Sigmoid colon (tissue), 7 donors: ENCODE measurements at regions of chr13 and their contacts with region 1.

Region 1: DNA sequence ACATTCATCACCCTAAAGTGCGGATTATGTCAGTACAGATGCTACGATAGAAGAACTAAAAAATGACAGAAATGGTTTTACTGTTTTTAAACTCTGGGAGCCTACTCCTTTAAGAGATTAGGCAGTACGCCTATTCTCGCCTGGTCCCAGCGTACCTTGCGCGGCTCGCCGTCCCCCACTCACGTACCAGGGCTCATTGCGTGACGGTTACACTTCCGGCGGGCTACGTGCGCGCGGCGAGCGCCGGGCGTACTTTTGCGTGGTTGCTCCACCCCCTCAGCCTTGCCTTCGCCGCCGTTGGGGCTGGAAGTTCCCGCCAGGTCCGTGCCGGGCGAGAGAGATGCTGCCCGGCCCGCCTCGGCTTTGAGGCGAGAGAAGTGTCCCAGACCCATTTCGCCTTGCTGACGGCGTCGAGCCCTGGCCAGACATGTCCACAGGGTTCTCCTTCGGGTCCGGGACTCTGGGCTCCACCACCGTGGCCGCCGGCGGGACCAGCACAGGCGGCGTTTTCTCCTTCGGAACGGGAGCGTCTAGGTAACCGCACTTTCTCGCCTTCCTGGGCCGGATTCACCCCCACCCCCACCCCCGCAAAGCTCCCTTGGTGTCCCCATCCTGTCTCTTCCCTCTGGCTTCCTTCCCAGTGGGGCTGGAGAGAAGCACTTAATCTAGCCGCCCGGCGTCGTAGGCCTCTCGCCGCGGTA is at the start of gene NUP58:
- DNase-seq: peak; percentile 98
- H3K4me3 ChIP-seq: peak within 1 kb of the TSS; percentile 72 to 82 (median 74)
- H3K27ac ChIP-seq: peak within 1 kb of the TSS; percentile 91 to 96 (median 94)
- H3K4me1 ChIP-seq: peaks cover 0 to 15% (median 11%) of the 10 kb centered on the region in 4 donors
- H3K27me3 ChIP-seq: no peaks in the 10 kb centered on the region
- CTCF ChIP-seq: no peak
- EP300 ChIP-seq: peak in 1 of 4 donors; percentile 80
- POLR2A ChIP-seq: peak; percentile 71 to 73
- total RNA-seq, gene NUP58: 30.3 to 50.3 (median 34.1) TPM

Region 2: DNA sequence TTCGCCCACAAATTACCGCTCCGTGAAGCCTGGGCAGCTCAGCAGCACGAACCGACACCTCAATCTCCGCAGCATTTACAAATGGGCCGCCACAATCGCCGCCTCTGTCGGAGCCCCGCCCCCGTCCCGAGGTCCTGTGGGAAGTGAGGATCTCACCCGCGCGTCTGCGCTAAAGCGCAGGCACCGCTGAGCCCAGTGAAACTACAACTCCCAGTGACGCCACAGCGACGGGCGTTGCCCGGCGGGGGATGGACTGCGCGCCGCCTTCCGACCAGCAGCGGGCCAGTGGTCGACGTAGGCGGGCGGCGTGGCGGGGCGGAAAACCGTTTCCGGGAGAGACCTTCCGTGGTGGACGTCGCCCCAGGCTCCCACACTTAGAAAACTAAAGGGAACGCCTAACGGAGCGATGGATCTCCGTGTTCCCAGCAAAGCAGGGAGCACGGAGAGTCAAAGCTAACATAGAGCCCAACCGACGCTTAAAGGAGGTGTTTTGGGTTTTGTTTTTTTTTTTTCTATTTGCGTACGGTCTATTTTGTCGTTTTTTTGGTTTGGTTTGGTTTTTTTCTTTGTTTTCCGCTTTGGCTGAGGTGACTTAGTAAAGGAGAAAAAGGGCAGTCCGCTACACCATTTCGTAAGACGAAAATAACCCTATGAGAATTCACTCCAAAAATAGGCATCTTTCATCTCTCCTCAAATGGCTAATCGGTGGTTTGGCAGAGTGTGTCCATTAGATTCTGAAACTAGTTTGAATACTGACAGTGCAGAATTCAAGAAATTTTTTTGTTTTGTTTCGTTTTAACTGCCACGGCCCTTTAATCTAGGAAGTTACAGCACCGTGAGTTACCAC is 378.5 kb before region 1 on chr13:
- intact Hi-C with region 1: loop called (anchors 5 kb)
- DNase-seq: peak; percentile 98
- H3K4me3 ChIP-seq: peak overlapping the region; percentile 66 to 95 (median 72)
- H3K27ac ChIP-seq: peak overlapping the region; percentile 94 to 96 (median 95)
- H3K4me1 ChIP-seq: peaks cover 0 to 19% (median 10%) of the 10 kb centered on the region in 4 donors
- H3K27me3 ChIP-seq: no peaks in the 10 kb centered on the region
- CTCF ChIP-seq: no peak
- EP300 ChIP-seq: no peak
- POLR2A ChIP-seq: peak; percentile 39 to 61

Region 3: DNA sequence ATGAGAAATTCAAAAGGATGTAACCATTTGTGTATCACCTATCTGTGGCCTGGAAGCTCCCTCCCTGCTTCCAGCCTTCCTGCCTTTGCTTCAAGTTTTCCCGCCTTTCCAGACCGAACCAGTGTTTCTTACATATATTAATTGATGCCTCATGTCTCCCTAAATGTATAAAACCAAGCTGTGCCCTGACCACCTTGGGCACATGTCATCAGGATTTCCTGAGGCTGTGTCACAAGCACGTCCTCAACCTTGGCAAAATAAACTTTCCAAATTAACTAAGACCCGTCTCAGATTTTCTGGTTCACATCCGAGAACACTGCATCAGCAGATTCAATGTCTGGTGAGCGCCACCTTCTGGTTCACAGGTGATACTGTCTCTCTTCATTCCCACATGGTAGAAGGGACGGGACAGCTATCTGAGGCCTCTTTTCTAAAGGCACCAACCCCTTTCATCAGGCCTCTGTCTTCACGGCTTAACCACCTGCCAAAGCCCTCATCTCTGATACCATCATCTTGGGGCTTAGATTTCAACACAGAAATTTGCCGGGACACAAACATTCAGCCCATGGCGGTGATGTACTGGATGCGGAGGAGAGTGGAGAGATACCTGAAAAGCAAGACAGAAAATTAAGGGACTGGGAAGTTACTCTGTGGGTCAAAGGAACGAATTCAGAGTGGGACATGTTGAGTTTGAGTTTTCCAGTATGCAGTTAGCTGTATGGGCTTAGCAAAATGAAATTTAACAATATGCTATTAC is 264.3 kb before region 1 on chr13:
- intact Hi-C with region 1: no loop called
- DNase-seq: no peak
- H3K4me3 ChIP-seq: no peak overlapping the region
- H3K27ac ChIP-seq: no peak overlapping the region
- H3K4me1 ChIP-seq: no peaks in the 10 kb centered on the region
- H3K27me3 ChIP-seq: peaks cover 0 to 11% (median 0%) of the 10 kb centered on the region in 3 donors
- CTCF ChIP-seq: peak; percentile 39 to 75 (median 61)
- EP300 ChIP-seq: no peak
- POLR2A ChIP-seq: no peak

Region 4: DNA sequence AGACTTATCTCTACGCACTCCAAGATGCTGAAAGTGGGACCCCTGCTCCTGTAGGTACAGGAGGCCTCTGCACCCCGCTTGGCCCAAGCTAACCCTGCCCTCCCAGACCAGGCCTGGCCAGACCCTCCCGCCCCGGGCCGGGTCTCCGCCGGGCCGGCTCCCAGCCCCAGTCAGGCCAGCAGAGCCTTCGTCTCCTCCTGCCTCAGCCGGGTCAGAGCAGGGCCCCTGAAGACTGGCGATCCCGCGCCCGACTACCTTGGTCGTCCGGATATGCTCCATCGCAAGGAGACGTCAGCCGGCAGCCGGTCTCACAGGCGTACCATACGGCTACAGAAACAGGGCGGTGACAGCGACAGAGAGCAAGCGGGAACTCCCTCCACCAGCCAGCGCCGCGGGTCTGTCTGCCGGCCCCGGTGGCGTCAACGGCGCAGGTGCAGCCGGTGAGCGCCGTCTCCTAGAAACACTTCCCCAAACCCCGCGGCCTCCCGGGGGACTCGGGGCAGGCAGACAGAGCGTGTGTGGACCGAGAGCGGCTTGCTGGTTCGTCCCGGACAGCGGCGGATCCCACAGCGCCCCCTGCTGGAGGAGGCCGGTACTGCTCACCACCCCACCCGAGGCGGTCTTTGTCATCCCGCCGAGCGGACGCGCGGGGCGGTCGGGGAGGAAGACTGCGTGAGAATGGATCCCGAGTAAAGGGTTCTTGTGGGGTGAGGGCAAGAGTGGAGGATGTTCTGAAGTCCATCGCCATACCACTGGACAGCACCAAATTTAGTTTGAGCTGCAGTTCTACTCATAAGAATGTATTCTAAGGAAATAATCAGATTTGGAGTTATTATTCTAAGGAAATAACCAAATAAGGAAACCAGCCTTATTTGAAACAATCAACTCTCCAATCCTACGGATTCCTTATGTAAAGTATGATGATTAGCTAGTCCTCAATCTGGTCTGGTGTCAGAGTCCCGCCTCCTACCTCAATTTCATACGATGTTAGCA is 14.2 kb before region 1 on chr13 and contains the start of gene MTMR6:
- intact Hi-C with region 1: loop called (anchors 2 kb)
- DNase-seq: peak; percentile 95
- H3K4me3 ChIP-seq: peak within 1 kb of the TSS; percentile 86 to 94 (median 89)
- H3K27ac ChIP-seq: peak within 1 kb of the TSS; percentile 80 to 93 (median 90)
- H3K4me1 ChIP-seq: peaks cover 0 to 30% (median 18%) of the 10 kb centered on the region in 4 donors
- H3K27me3 ChIP-seq: no peaks in the 10 kb centered on the region
- CTCF ChIP-seq: peak; percentile 98 to 100 (median 99)
- EP300 ChIP-seq: no peak
- POLR2A ChIP-seq: peak; percentile 34 to 55
- total RNA-seq, gene MTMR6: 21.6 to 33.1 (median 29.9) TPM

Region 5: GRCh38 chr13:26557393-26558023 is 1256.0 kb after region 1 on chr13 and contains the start of gene WASF3:
- intact Hi-C with region 1: loop called (anchors 10 kb)
- DNase-seq: peak; percentile 97
- H3K4me3 ChIP-seq: peak within 1 kb of the TSS; percentile 78 to 91 (median 84)
- H3K27ac ChIP-seq: peak within 1 kb of the TSS; percentile 59 to 83 (median 78)
- H3K4me1 ChIP-seq: peaks cover 0 to 15% (median 8%) of the 10 kb centered on the region in 4 donors
- H3K27me3 ChIP-seq: no peaks in the 10 kb centered on the region
- CTCF ChIP-seq: no peak
- EP300 ChIP-seq: no peak
- POLR2A ChIP-seq: no peak
- total RNA-seq, gene WASF3: 12.4 to 17.1 (median 14.6) TPM